ENCODE measurements at regions of chr10 and their contacts with region 1.

Region 1: DNA sequence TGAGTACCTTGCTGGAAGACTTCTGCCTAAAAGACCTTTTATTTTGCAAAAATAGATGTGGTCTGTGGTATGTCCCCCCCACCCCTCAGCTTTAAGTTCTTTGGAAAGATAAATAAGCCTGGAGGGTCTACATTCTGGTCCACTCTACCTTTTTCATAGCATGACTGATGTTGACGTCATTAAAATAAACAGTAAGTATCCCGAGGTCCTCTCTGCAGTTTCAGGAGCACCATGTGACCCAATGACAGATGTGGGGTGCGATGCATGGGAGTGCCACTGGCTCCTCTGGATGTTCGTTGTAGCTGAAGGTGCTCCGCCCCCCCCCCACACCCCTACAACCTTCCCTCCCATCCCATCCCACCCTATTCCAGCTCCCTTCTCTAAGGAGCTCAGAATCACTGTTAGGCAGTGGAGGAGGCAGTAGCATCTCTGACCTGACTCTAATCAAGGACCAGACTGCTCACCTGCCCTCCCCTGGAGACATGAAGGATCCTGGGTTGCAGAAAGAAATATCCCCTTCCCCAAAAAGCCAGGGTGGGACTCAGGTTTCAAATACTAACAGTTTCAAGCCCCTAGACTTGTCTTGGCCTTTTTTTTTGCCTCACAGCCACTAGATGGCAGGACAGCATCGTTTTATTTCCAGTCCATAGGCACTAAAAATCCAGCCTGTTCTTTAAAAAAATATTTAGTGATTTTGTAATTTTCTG is 25.1 kb downstream of the CASP7 start:
- DNase-seq: peak in 2 of 5 donors; percentile 13
- H3K4me3 ChIP-seq: no peak overlapping the region
- H3K4me3 Mint-ChIP-seq: no peak overlapping the region
- H3K27ac ChIP-seq: no peak overlapping the region
- H3K27ac Mint-ChIP-seq: no peak overlapping the region
- H3K4me1 ChIP-seq: peaks cover 24% of the 10 kb centered on the region
- H3K4me1 Mint-ChIP-seq: peaks cover 24 to 46% (median 28%) of the 10 kb centered on the region in 4 donors
- H3K27me3 ChIP-seq: no peaks in the 10 kb centered on the region
- H3K27me3 Mint-ChIP-seq: no peaks in the 10 kb centered on the region

Region 2: GRCh38 chr10:113716109-113716910 is 11.5 kb after region 1 on chr10:
- CTCF ChIA-PET with region 1: interaction called, 12 read pairs
- POLR2A ChIA-PET with region 1: no interaction called
- intact Hi-C with region 1: no loop called
- DNase-seq: no peak
- H3K4me3 ChIP-seq: no peak overlapping the region
- H3K4me3 Mint-ChIP-seq: no peak overlapping the region
- H3K27ac ChIP-seq: no peak overlapping the region
- H3K27ac Mint-ChIP-seq: no peak overlapping the region
- H3K4me1 ChIP-seq: no peaks in the 10 kb centered on the region
- H3K4me1 Mint-ChIP-seq: peaks cover 0 to 5% (median under 1%) of the 10 kb centered on the region in 4 donors
- H3K27me3 ChIP-seq: no peaks in the 10 kb centered on the region
- H3K27me3 Mint-ChIP-seq: no peaks in the 10 kb centered on the region